ENCODE measurements at regions of chr20 and their contacts with region 1.

Region 1: DNA sequence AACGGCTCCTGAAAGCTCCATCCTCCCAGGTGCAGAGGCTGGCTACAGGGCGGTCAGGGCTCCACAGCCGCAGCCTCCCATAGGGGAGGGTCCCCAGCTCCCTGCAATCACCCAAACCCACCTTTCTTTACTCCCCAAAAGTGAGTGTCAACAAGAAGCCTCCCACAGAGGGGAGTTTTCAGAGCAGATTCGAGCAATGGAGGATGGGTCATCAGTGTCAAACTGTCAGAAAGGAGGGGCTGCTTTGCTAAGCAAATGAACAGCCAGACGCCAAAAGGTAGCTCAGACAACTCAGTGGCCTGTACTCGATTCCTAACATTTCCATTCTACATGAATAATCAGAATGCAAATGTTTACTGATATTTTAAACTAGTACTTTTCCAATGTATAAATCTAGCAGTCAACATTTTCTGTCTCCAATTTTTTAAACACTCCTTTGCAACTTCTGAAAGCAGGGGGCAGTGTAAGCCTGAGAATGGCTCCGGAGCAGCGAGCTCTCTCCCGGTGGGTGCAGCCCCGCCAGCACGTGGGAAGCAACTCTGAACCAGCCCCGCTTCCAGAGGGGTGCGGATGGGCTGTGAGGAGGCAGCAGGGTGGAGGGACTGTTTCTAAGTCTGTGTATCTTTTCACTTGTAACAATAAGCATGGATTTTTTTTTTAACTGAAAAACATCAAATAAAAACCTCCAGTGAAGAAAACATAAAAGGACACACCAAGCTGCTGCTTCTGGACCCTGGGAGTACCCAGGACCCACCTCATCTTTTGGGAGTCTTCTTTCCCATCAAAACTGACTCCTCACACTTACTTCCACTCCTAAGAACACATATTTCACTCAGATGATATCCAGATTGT is 54.9 kb downstream of the TAF4 start:
- DNase-seq: no peak
- H3K4me3 ChIP-seq: no peak overlapping the region
- CTCF ChIP-seq: peak; percentile 44

Region 2: DNA sequence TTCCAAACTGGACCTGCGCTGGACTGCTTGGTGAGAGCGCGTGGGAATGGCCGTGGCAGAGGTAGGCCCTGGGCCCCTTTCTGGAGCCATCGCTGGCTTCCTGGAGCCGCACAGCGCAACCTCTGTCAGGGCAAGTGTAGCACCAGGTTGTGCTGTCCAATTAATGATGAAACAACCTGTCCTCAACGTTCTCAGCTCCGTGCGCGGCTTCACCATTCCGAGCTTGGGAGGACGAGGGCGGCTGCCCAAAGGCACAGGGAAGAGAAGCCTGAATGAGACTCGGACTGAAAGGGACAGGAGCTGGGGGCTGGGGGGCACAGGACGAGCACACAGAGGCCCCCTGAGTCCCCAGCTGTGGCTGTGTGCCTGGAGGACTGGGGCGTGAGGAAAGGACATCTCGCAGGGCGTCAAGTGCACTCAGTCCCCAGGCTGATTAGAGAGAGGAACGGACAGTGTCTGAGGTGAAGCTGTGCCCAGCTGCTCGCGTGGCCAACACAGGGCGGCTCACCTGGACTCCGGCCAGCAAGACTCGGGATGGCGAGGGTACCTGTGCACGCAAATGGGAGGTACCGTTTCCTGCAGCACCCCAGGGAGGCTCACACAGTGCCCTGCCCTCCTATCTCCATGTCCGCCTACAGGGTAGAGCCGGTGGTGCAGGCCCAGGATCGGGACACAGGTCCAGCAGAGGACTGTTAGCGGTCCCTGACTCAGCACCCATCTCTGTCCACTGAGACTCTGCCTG is 348.4 kb before region 1 on chr20:
- CTCF ChIA-PET with region 1: no interaction called
- POLR2A ChIA-PET with region 1: no interaction called
- DNase-seq: no peak
- H3K4me3 ChIP-seq: no peak overlapping the region
- CTCF ChIP-seq: no peak

Region 3: DNA sequence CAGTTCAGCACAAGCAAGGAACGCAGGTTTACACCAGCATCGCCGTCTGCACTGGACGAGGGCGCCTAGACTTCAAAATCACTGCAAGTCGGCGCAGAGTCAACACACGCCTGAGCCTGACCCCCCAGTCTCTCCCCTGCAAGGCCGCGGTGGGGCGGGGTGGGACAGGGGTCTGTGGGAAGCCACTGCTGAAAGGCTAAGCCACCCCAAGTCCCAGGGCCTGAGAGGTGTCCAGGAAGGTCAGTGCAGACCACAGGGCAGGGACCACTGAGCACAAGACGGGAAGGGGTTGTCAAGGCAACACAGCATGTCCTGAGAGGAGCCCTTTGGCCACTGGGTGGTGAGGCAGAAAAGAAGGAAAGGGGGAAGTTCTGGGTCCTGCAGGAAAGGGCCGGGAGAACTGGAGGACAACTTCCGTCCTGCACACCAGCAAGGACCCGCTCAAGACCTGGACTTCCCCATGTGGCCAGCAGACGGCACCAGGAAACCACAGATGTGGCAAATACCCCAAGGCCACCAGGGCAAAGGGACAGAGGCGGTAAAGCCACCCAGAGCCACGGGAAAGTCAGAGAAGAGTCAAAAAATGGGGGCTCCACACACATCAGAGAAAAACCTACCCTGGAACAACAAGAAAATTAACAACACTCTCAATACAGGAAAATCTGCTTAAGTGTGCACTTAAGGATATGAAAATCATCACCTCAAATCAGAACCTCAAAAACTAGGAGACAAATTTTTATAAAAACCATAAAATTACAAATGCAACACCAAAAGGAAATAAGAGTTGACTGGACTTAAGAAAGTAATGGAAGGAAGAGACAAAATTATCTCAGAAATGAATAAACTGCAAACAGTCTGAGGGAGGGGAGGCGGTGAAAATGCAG is 29.8 kb before region 1 on chr20:
- CTCF ChIA-PET with region 1: no interaction called
- POLR2A ChIA-PET with region 1: no interaction called
- DNase-seq: no peak
- H3K4me3 ChIP-seq: no peak overlapping the region
- CTCF ChIP-seq: peak; percentile 37

Region 4: DNA sequence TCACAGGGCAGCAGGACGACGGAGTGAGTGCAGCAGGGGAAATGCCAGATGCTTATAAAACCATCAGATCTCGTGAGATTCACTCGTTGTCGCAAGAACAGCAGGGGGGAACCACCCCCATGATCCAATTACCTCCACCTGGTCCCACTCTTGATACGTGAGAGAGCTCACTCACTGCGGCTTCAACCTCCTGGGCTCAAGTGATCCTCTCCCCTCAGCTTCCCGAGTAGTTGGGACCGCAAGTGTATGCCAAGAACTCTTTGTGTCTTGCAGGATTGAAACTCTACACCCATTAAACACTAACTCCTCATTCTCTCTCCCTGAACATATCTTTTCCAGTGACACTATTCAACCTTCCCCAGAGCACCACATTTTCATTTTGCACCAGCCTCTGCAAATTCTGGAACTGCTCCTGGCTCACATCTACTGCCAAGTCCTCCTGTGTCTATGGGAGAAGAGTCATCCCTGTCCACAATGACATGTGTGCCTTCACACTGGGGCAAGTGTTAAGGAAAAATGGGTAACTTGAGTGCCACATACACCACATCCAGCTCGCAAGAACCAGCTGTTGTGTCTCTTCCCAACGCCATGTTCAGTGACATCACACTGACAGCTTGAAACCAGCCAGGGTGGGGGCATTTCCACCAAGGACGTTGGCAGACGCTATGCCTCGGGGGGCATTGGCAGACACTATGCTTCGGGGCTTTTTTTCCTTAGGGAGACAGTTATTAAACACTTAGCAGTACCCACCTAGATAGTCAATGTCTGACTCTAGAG is 69.7 kb after region 1 on chr20:
- CTCF ChIA-PET with region 1: no interaction called
- POLR2A ChIA-PET with region 1: no interaction called
- DNase-seq: no peak
- H3K4me3 ChIP-seq: no peak overlapping the region
- CTCF ChIP-seq: no peak

Region 5: GRCh38 chr20:62121776-62122631 is 111.2 kb after region 1 on chr20 and contains the start of gene LSM14B:
- CTCF ChIA-PET with region 1: interaction called, 45 read pairs
- POLR2A ChIA-PET with region 1: no interaction called
- DNase-seq: peak; percentile 55
- H3K4me3 ChIP-seq: peak within 1 kb of the TSS; percentile 82
- CTCF ChIP-seq: no peak

Region 6: GRCh38 chr20:62156592-62157386 is 146.0 kb after region 1 on chr20:
- CTCF ChIA-PET with region 1: interaction called, 36 read pairs
- POLR2A ChIA-PET with region 1: no interaction called
- DNase-seq: no peak
- H3K4me3 ChIP-seq: no peak overlapping the region
- CTCF ChIP-seq: peak; percentile 85

Region 7: GRCh38 chr20:62376112-62377063 is 365.6 kb after region 1 on chr20:
- CTCF ChIA-PET with region 1: interaction called, 22 read pairs
- POLR2A ChIA-PET with region 1: no interaction called
- DNase-seq: no peak
- H3K4me3 ChIP-seq: no peak overlapping the region
- CTCF ChIP-seq: peak; percentile 63

Measured in AG04449 (cell line).